ENCODE measurements at regions of chr2 and their contacts with region 1.

Region 1: GRCh38 chr2:24973812-24974211 is 2.1 kb upstream of the DNAJC27 start:
- DNase-seq: no peak
- H3K4me3 ChIP-seq: no peak overlapping the region
- H3K27ac ChIP-seq: peak overlapping the region in 1 of 4 donors; percentile 97
- H3K4me1 ChIP-seq: peaks cover 4 to 22% (median 7%) of the 10 kb centered on the region in 4 donors
- H3K27me3 ChIP-seq: no peaks in the 10 kb centered on the region
- CTCF ChIP-seq: no peak
- EP300 ChIP-seq: no peak
- POLR2A ChIP-seq: no peak

Region 2: DNA sequence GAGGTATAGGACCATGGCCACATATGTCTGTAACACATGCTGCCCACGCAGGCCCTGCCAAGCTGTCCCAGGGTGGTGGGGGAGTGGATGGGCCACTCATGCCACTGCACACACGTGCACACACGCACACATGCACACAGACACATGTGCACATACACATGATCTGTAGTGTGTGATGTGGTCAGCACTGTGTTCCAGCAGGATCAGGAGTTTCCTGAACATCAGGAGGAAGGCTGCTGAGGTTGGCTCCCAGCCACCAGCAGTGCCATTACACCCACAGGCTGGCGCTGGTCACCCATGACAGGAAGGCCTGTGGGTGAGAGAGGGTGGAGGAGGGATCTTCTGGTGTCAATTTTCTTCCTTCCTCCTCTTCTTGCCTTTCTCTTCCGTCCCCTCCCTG is 149.9 kb after region 1 on chr2:
- in situ Hi-C with region 1: loop called in 1 of 4 experiments (anchors 5 kb)
- intact Hi-C with region 1: loop called (anchors 2 kb)
- DNase-seq: no peak
- H3K4me3 ChIP-seq: no peak overlapping the region
- H3K27ac ChIP-seq: no peak overlapping the region
- H3K4me1 ChIP-seq: no peaks in the 10 kb centered on the region
- H3K27me3 ChIP-seq: no peaks in the 10 kb centered on the region
- CTCF ChIP-seq: no peak
- EP300 ChIP-seq: no peak
- POLR2A ChIP-seq: no peak

Region 3: GRCh38 chr2:25378731-25379490 is 405.1 kb after region 1 on chr2:
- in situ Hi-C with region 1: no loop called
- intact Hi-C with region 1: no loop called
- DNase-seq: no peak
- H3K4me3 ChIP-seq: no peak overlapping the region
- H3K27ac ChIP-seq: no peak overlapping the region
- H3K4me1 ChIP-seq: peaks cover 6 to 20% (median 13%) of the 10 kb centered on the region in 4 donors
- H3K27me3 ChIP-seq: no peaks in the 10 kb centered on the region
- CTCF ChIP-seq: no peak
- EP300 ChIP-seq: no peak
- POLR2A ChIP-seq: no peak

Measured in transverse colon (tissue), 4 donors.